Common myeloid progenitor, CD34-positive (primary cell): ENCODE measurements at regions of chr9 and their contacts with region 1.

Region 1: DNA sequence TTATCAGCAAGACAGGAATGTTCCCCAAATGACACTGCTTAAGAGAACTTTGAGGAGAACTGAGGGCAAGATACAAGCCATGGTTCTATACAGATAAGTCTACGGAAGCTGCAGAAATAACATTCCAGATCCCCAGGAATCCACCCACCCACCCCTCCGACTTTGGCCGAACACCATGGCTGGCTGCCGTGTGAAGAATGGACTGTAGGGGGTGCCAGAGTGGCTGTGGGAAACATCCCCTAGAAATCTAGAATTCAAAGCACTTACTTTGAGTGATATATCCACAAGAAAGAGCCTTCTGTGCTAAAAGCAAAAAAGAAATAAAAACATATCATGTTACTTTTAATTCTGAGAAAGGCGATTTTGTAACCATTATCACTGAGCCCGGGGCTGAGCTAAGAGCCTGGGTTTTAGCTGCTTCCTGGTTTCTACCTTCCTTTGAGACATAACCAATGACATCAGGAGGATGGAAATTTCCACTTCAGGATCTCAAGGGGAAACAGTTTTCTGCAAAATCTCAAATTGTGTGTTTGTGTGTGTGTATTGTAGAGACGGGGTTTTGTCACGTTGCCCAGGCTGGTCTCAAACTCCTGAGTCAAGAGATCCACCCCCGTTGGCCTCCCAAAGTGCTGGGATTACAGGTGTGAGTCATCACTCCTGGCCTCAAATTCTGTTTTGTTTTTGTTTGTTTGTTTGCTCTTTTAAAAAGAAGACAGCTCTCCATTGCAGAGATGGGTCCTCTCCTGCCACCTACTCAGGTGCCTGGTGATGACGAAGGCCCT is 36.4 kb downstream of the GGTA1 start:
- DNase-seq: peak; percentile 42 to 64 (median 54)
- H3K4me3 ChIP-seq: no peak overlapping the region
- H3K27ac ChIP-seq: no peak overlapping the region
- H3K4me1 ChIP-seq: peaks cover 0 to 6% (median 0%) of the 10 kb centered on the region in 4 experiments
- H3K27me3 ChIP-seq: no peaks in the 10 kb centered on the region

Region 2: DNA sequence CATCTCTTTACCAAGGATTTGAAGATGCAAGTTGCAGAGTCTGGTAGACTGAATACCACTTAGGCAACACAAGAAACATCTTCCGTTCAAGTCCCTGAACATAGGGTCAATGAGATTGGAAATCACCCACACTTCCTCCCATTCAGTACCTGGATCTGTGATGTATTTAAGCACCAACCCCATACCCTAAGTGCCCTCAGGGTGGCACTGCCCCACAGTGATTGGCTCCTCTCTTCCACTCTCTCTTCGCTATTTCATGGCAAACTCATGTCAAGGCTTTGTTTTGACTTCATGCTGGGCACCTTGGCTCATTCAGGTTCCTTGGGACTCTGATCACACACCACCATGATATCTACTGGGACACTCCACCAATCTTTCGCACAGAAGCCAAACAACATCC is 17.2 kb before region 1 on chr9:
- CTCF ChIA-PET with region 1: interaction called, 25 read pairs
- POLR2A ChIA-PET with region 1: no interaction called
- DNase-seq: peak; percentile 66 to 73 (median 71)
- H3K4me3 ChIP-seq: no peak overlapping the region
- H3K27ac ChIP-seq: no peak overlapping the region
- H3K4me1 ChIP-seq: peaks cover 6 to 17% (median 15%) of the 10 kb centered on the region in 4 experiments
- H3K27me3 ChIP-seq: peaks cover 0 to 19% (median 6%) of the 10 kb centered on the region in 5 experiments

Region 3: DNA sequence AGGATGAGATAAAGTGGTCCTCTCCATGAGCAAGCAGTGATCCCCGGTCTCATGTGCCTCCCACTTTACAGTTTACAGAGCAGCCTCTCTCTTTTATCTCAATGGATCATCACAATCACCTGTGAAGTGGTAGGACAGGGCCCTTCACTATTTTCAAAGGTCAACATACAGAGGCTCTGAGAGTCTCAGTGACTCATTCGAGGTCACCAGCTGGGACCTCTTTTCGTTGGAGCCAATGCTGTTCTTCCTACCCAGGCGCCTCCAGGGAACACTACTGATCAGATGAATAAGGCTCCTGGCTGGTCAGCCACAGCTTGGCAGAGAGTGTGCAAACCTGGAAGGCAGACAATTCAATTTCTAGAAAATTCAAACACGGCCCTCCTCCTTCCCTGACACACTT is 19.8 kb after region 1 on chr9:
- CTCF ChIA-PET with region 1: interaction called, 24 read pairs
- POLR2A ChIA-PET with region 1: no interaction called
- DNase-seq: no peak
- H3K4me3 ChIP-seq: no peak overlapping the region
- H3K27ac ChIP-seq: no peak overlapping the region
- H3K4me1 ChIP-seq: peaks cover 13 to 32% (median 27%) of the 10 kb centered on the region in 4 experiments
- H3K27me3 ChIP-seq: no peaks in the 10 kb centered on the region

Region 4: DNA sequence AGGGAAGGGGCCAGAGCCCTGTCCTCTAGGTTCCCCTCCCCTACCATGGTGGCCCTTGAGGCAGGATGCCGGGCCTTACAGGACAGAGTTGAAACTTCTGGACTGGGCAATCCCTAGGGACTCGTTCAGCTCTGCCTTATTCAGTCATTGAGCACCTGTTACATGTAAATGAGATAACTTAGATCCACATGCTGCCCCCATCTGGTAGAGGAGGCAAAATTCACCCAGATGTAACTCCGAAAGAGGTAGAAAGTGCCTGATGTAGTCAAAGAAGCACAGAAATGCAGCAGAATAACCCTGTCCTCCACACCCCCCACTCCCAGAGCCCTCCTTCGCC is 34.9 kb after region 1 on chr9:
- CTCF ChIA-PET with region 1: interaction called, 26 read pairs
- POLR2A ChIA-PET with region 1: no interaction called
- DNase-seq: peak; percentile 81 to 91 (median 91)
- H3K4me3 ChIP-seq: peak overlapping the region; percentile 45 to 87 (median 76)
- H3K27ac ChIP-seq: no peak overlapping the region
- H3K4me1 ChIP-seq: peaks cover 2 to 66% (median 47%) of the 10 kb centered on the region in 4 experiments
- H3K27me3 ChIP-seq: no peaks in the 10 kb centered on the region

Region 5: GRCh38 chr9:121593066-121593465 is 129.8 kb after region 1 on chr9:
- CTCF ChIA-PET with region 1: no interaction called
- POLR2A ChIA-PET with region 1: no interaction called
- DNase-seq: no peak
- H3K4me3 ChIP-seq: no peak overlapping the region
- H3K27ac ChIP-seq: no peak overlapping the region
- H3K4me1 ChIP-seq: no peaks in the 10 kb centered on the region
- H3K27me3 ChIP-seq: peaks cover 9 to 34% (median 17%) of the 10 kb centered on the region in 5 experiments